ENCODE measurements at regions of chr2 and their contacts with region 1.

Region 1: DNA sequence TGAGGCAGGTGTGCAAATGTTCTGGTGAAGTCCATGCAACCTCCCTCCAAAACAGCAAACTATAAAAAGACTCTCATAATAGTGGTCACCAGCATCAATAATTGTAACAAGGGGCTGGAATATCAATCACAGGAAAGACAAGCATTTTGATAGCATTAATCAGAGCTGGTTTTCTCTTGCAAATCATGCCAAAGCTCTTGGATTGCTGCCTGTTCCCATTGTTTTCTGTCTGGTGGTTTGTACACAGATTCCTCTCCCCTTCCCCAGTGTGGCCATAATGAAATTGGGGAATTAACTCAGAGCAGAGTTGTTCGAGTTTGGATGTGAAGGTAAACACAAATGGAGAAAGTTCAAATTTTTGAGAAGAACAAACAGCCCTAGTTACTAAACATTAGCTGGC is 134.2 kb downstream of the CDCA7 start:
- DNase-seq: no peak

Region 2: DNA sequence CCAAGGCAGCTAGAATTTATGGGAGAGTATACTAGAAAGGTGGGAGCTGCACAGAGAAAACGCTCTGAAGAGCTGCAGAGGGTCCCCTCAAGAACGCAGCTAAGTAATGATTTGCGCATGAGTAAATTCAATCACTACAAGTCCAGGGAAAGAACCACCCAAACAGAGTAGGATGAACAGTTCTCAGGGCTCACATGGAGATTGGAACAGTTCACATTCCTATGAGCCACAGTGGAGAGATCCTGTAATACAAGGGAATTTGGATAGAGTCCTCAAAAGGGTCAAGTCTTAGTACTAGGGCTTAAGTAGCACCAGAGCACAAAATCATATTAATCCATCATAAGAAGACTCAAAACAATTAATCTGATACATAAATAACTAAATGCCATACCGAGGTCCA is 746.8 kb after region 1 on chr2:
- intact Hi-C with region 1: loop called in 1 of 2 experiments (anchors 10 kb)
- DNase-seq: no peak

Region 3: GRCh38 chr2:175463589-175464310 is 1974.9 kb after region 1 on chr2:
- intact Hi-C with region 1: no loop called
- DNase-seq: no peak